ENCODE measurements at regions of chr6 and their contacts with region 1.

Region 1: GRCh38 chr6:33082702-33083101 is 6.9 kb downstream of the HLA-DPB1 start:
- DNase-seq: peak; percentile 49
- H3K4me3 ChIP-seq: no peak overlapping the region
- H3K27ac ChIP-seq: peak overlapping the region; percentile 90
- H3K4me1 ChIP-seq: peaks cover 36% of the 10 kb centered on the region
- H3K27me3 ChIP-seq: no peaks in the 10 kb centered on the region
- CTCF ChIP-seq: peak; percentile 57

Region 2: GRCh38 chr6:33014841-33015634 is 67.7 kb before region 1 on chr6:
- intact Hi-C with region 1: loop called (anchors 5 kb)
- DNase-seq: no peak
- H3K4me3 ChIP-seq: peak overlapping the region; percentile 14
- H3K27ac ChIP-seq: peak overlapping the region; percentile 72
- H3K4me1 ChIP-seq: peaks cover 43% of the 10 kb centered on the region
- H3K27me3 ChIP-seq: peaks cover 28% of the 10 kb centered on the region
- CTCF ChIP-seq: peak; percentile 89

Region 3: DNA sequence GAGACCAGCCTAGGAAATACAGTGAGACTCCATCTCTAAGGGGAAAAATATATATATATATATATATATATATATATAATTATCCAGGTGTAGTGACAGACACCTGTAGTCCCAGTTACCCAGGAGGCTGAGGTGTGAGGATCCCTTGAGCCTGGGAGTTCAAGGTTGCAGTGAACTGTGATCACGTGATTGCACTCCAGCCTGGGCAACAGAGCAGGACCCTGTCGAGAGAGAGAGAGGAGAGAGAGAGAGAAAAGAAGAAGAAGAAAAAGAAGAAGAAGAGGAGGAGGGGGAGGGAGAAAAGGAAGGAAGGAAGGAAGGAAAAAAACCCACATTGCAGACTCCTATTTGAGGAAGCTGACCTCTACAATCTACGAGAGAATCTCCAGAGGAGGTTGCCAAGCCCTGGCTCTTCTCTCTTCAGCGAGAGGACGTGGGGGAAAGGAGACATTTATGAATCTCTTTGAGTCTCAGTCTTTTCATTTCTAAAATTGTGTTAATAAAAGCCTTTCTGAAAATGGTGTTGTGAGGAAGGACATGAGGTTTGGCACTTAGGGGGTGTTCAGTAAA is 59.9 kb after region 1 on chr6:
- intact Hi-C with region 1: no loop called
- DNase-seq: no peak
- H3K4me3 ChIP-seq: no peak overlapping the region
- H3K27ac ChIP-seq: no peak overlapping the region
- H3K4me1 ChIP-seq: no peaks in the 10 kb centered on the region
- H3K27me3 ChIP-seq: peaks cover 62% of the 10 kb centered on the region
- CTCF ChIP-seq: no peak